Aorta (tissue), 5 donors: ENCODE measurements at regions of chr1 and their contacts with region 1.

Region 1: DNA sequence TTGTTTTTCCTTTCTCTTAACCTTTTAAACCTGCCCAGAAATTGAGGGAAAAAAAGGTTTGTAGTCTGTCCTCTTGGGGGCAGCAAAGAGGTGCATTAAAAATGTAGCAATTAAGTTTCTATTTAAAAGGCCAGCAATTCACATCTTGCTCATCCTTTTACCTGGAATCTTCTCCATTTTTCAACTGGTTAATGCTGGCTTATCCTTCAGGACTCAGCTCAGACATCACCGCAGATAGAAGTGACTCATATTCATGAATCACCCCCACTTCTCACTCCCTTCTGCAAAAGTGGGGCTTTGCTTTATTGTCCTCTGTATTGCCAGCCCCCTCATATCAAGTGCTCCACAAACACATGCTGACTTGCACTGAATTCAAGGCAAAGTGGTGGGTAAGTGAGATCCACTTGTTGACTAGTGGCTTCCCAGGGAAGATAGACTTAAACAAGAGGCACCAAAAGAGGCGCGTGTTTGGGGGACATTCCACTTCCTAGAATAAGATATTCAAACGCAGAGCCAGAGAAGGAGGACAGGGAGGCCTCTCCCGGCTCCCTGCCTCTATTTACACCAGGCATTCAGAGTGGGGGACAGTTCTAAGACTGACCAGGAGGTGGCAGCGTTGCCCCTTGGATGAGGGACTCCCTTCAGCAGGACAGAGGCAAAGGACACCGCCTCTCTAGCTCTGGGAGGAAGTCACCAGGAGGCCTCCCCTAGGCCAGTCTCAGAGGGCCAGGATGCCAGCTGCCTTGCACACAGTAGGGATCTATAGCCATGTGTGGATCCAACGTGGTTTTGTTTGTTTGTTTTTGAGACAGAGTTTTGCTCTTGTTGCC is 23.2 kb upstream of the ZNF648 start:
- DNase-seq: peak; percentile 90 to 93
- ATAC-seq: peak; percentile 91
- H3K4me3 ChIP-seq: no peak overlapping the region
- H3K27ac ChIP-seq: no peak overlapping the region
- H3K4me1 ChIP-seq: no peaks in the 10 kb centered on the region
- H3K27me3 ChIP-seq: no peaks in the 10 kb centered on the region

Region 2: GRCh38 chr1:181479137-181479745 is 605.5 kb before region 1 on chr1:
- intact Hi-C with region 1: loop called (anchors 5 to 10 kb)
- DNase-seq: no peak
- ATAC-seq: peak; percentile 76
- H3K4me3 ChIP-seq: no peak overlapping the region
- H3K27ac ChIP-seq: no peak overlapping the region
- H3K4me1 ChIP-seq: no peaks in the 10 kb centered on the region
- H3K27me3 ChIP-seq: no peaks in the 10 kb centered on the region

Region 3: GRCh38 chr1:182143154-182143657 is 58.5 kb after region 1 on chr1:
- intact Hi-C with region 1: loop called in 1 of 2 experiments (anchors 2 kb)
- DNase-seq: peak; percentile 95 to 98
- ATAC-seq: peak; percentile 88
- H3K4me3 ChIP-seq: no peak overlapping the region
- H3K27ac ChIP-seq: no peak overlapping the region
- H3K4me1 ChIP-seq: no peaks in the 10 kb centered on the region
- H3K27me3 ChIP-seq: no peaks in the 10 kb centered on the region

Region 4: GRCh38 chr1:182235952-182236650 is 151.4 kb after region 1 on chr1:
- intact Hi-C with region 1: no loop called
- DNase-seq: no peak
- ATAC-seq: no peak
- H3K4me3 ChIP-seq: no peak overlapping the region
- H3K27ac ChIP-seq: no peak overlapping the region
- H3K4me1 ChIP-seq: no peaks in the 10 kb centered on the region
- H3K27me3 ChIP-seq: no peaks in the 10 kb centered on the region

Region 5: DNA sequence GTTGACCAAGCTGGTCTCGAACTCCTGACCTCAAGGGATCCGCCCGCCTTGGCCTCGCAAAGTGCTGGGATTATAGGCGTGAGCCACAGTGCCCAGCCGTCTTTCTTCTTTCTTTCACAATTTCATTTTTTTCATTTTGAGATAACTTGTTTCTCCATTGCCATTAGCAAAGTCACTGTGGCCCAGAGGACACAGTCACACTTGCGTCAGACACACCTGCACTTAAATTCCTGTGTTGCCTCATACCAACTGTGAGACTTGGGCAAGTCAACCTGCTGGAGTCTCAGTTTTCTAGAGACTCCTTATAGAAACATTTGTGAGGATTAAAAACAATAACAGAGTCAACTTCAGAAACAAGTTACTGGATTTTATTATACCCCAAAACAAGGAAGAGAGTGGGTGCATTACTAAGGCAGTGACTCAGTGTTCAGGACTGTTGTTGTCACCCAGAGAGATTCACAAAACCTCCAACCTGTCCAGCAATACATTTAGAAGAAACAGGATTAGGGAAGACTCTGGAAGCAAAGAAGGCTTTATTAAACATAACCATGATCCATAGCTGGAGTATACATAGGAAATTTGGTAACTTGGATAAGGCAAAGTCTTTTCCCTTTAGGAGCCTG is 313.2 kb after region 1 on chr1:
- intact Hi-C with region 1: loop called (anchors 1 to 2 kb)
- DNase-seq: no peak
- ATAC-seq: no peak
- H3K4me3 ChIP-seq: no peak overlapping the region
- H3K27ac ChIP-seq: no peak overlapping the region
- H3K4me1 ChIP-seq: no peaks in the 10 kb centered on the region
- H3K27me3 ChIP-seq: no peaks in the 10 kb centered on the region

Region 6: GRCh38 chr1:182595641-182596240 is 511.0 kb after region 1 on chr1:
- intact Hi-C with region 1: loop called in 1 of 2 experiments (anchors 10 kb)
- DNase-seq: peak; percentile 83 to 88
- ATAC-seq: peak; percentile 89
- H3K4me3 ChIP-seq: no peak overlapping the region
- H3K27ac ChIP-seq: peak overlapping the region in 1 of 2 donors; percentile 38
- H3K4me1 ChIP-seq: no peaks in the 10 kb centered on the region
- H3K27me3 ChIP-seq: no peaks in the 10 kb centered on the region

Region 7: DNA sequence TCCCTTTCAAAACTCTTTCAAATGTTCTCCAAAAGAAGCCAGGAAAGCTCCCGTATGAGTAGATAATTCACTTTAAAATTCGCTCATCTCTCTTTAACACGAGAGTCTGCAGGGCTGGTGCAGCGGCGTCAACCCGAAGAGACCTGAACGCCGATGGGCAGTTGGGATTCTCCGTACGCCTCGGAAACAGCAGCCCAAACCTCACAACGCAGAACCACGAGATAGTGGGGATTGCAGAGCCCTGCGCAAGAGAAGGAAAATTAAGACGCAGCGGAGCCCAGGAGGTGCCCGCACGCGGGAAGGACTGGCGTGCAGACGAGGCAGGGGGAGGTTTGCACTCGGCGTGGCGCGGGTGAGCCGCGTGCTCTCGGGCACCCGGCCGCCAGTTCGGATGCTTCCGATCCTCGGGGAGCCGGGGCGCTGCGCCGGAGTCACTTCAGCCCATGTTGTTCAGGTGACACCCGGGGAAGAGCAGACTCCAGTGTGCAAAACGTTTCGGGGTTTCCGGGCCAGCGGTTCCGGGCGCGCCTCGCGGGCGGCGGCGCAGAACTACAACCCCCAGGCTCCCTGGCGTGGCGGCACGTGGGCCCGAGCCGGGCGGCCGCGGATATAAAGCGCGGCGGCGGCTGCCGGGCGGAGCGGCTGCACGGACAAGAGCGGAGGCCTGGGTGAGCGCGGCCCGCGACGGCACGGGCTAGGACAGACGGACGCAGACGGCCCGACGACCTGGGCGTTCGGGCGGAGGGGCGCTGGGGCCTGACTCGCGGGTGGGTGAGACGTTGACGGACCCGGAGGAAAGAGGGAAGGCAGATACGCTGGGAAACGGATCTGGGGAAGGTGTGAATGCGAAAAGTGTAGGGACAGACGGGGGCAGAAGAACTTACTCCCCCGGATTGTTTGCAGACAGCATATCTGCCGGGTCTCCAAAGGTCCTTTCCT is 704.7 kb after region 1 on chr1 and contains the start of gene NPL:
- intact Hi-C with region 1: loop called in 1 of 2 experiments (anchors 10 kb)
- DNase-seq: peak; percentile 92 to 95
- ATAC-seq: peak; percentile 97
- H3K4me3 ChIP-seq: peak within 1 kb of the TSS; percentile 49 to 59
- H3K27ac ChIP-seq: no peak within 1 kb of the TSS
- H3K4me1 ChIP-seq: no peaks in the 10 kb centered on the region
- H3K27me3 ChIP-seq: no peaks in the 10 kb centered on the region
- total RNA-seq, gene NPL: 16.1 to 36.6 TPM